MCF 10A (cell line): ENCODE measurements at regions of chr13 and their contacts with region 1.

Region 1: GRCh38 chr13:99442273-99442895 is 58.9 kb upstream of the TM9SF2 start:
- DNase-seq: peak; percentile 61
- H3K4me3 Mint-ChIP-seq: no peak overlapping the region
- H3K27ac Mint-ChIP-seq: no peak overlapping the region
- H3K4me1 Mint-ChIP-seq: no peaks in the 10 kb centered on the region
- H3K27me3 Mint-ChIP-seq: peaks cover 19% of the 10 kb centered on the region
- CTCF ChIP-seq: peak; percentile 92

Region 2: DNA sequence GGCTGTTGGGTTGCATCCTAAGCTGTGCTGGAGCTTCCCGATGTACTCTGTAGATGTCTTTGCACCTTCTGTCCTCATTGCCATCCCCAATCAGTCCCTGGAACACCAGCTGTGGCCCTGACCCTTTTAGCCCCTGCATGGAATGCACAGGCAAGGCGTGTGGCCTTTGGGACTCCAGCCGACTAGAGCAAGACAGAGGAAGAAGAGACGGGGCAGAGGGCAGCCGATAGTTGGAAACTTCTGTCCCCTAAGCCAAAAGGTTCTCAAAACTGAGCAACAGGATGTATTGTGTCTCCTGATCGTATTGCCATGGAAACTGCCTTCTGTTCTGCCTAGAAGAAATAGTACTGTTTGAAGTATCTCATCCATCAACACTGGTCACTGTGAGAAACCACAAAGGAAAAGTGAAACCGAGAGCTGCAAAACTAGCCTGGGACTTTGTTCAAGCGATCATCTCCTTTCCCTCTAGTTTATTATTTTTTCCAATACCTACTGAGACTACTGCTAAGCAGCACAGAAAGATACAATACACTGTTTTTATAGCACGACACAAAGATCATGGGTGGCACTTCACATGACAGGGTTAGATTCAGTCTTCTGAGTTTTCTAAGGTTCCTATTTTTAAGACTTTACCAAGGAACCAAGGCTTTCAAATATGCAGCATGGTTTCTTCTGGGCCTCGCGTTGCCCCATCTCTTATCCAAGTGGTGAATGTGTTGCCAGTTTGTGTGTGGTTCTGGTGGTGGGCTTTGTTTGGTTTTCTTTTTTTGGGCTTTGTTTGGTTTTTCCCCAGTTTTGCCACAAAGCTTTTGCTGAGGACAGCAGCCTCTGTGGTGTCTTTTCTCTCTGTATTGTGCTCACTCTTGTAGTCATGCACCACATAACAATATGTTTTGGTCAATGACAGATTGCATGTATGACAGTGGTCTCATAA is 86.0 kb before region 1 on chr13:
- CTCF ChIA-PET with region 1: no interaction called
- POLR2A ChIA-PET with region 1: no interaction called
- intact Hi-C with region 1: no loop called
- DNase-seq: no peak
- H3K4me3 Mint-ChIP-seq: no peak overlapping the region
- H3K27ac Mint-ChIP-seq: no peak overlapping the region
- H3K4me1 Mint-ChIP-seq: no peaks in the 10 kb centered on the region
- H3K27me3 Mint-ChIP-seq: no peaks in the 10 kb centered on the region
- CTCF ChIP-seq: no peak

Region 3: DNA sequence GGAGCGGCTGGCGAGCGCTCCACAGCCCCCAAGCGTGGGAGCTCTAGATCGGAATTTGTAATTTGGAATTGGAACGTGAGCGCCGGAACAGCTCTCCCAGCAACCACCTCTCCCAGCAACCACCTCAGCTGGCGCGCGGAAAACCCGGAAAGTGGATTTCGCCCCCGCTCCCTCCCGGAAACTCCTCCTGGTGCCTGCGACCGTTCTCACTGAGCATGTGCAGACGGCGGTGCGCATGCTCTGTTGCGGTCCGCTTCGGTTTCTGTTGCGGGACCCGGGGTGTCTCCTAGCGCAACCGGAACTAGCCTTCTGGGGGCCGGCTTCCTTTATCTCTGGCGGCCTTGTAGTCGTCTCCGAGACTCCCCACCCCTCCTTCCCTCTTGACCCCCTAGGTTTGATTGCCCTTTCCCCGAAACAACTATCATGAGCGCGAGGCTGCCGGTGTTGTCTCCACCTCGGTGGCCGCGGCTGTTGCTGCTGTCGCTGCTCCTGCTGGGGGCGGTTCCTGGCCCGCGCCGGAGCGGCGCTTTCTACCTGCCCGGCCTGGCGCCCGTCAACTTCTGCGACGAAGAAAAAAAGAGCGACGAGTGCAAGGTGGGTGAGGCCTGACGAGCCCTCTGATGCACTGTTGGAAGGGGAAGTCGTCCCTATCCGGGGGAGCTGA is 58.9 kb after region 1 on chr13 and contains the start of gene TM9SF2:
- CTCF ChIA-PET with region 1: interaction called, 43 read pairs
- POLR2A ChIA-PET with region 1: interaction called, 3 read pairs
- intact Hi-C with region 1: loop called (anchors 1 kb)
- DNase-seq: peak; percentile 96
- H3K4me3 Mint-ChIP-seq: peak within 1 kb of the TSS; percentile 90
- H3K27ac Mint-ChIP-seq: peak within 1 kb of the TSS; percentile 83
- H3K4me1 Mint-ChIP-seq: peaks cover 27% of the 10 kb centered on the region
- H3K27me3 Mint-ChIP-seq: no peaks in the 10 kb centered on the region
- CTCF ChIP-seq: no peak
- total RNA-seq, gene TM9SF2: 71.1 and 77.0 TPM in 2 replicates

Region 4: DNA sequence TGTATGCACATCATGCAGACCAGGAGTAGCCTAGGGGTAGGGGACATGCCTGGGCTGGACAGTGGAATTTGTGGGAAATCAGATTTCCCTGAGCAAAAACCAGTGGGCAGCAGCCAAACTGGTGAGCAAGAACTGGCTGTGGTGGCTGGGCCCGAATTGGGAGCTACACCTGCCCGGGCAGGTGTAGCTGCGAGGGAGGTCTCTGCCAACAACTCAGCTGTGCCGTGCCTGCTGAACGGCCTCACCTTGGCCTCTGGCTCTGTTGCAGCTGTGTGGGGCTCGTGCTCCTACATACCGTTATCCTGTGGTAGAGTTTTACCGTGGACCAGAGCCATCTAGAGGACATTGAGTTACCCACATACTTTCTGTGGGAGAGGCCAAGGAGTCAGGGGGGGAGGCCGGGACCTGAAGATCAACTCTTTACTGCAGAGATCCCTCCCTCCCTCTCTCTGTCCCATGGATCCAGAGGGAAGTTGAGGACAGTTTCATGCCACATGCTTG is 172.1 kb after region 1 on chr13:
- CTCF ChIA-PET with region 1: interaction called, 16 read pairs
- POLR2A ChIA-PET with region 1: no interaction called
- intact Hi-C with region 1: loop called (anchors 1 kb)
- DNase-seq: peak; percentile 85
- H3K4me3 Mint-ChIP-seq: no peak overlapping the region
- H3K27ac Mint-ChIP-seq: peak overlapping the region; percentile 33
- H3K4me1 Mint-ChIP-seq: peaks cover 9% of the 10 kb centered on the region
- H3K27me3 Mint-ChIP-seq: no peaks in the 10 kb centered on the region
- CTCF ChIP-seq: no peak

Region 5: DNA sequence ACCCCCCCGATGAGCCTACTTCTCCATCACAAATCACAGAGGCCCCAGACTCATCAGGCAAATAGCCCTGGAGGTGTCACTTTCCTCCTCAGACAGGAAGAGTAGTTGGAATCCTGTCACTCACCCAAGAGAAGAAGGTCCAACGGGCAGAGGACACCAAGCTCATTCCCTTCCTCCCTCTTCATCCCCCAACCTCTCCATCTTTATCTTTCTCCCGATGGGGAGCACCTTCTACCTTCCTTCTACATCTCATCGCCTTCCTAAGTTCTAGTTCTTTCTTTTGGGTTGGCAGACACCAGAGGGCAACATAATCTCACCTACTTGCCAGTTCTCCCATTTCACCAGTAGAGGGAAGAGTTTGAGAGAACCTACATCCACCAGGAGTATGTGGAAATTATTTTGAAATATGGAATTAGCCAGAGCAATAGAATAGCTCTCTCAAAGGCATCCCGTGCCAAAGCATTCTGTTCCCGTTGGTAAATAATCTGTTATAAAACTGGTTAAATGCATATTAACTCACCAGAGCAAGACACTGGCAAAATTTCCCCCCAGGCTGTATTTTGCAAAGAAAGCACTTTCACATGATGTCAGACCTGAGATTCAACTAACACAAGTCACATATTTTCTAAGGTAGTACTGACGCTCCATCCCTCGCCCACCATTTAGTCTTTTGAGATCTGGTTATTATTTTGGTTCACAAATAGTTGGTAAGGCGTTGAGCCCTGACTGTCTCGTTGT is 474.2 kb after region 1 on chr13:
- CTCF ChIA-PET with region 1: interaction called, 4 read pairs
- POLR2A ChIA-PET with region 1: no interaction called
- intact Hi-C with region 1: loop called (anchors 10 kb)
- DNase-seq: peak; percentile 86
- H3K4me3 Mint-ChIP-seq: no peak overlapping the region
- H3K27ac Mint-ChIP-seq: no peak overlapping the region
- H3K4me1 Mint-ChIP-seq: peaks cover 6% of the 10 kb centered on the region
- H3K27me3 Mint-ChIP-seq: no peaks in the 10 kb centered on the region
- CTCF ChIP-seq: peak; percentile 91

Region 6: GRCh38 chr13:100214886-100215285 is 772.5 kb after region 1 on chr13:
- CTCF ChIA-PET with region 1: no interaction called
- POLR2A ChIA-PET with region 1: no interaction called
- intact Hi-C with region 1: no loop called
- DNase-seq: peak; percentile 69
- H3K4me3 Mint-ChIP-seq: no peak overlapping the region
- H3K27ac Mint-ChIP-seq: peak overlapping the region; percentile 14
- H3K4me1 Mint-ChIP-seq: peaks cover 42% of the 10 kb centered on the region
- H3K27me3 Mint-ChIP-seq: no peaks in the 10 kb centered on the region
- CTCF ChIP-seq: no peak

Region 7: GRCh38 chr13:100235311-100235901 is 793.0 kb after region 1 on chr13:
- CTCF ChIA-PET with region 1: interaction called, 4 read pairs
- POLR2A ChIA-PET with region 1: interaction called, 3 read pairs
- intact Hi-C with region 1: loop called (anchors 10 kb)
- DNase-seq: peak; percentile 75
- H3K4me3 Mint-ChIP-seq: peak overlapping the region; percentile 26
- H3K27ac Mint-ChIP-seq: no peak overlapping the region
- H3K4me1 Mint-ChIP-seq: peaks cover 14% of the 10 kb centered on the region
- H3K27me3 Mint-ChIP-seq: no peaks in the 10 kb centered on the region
- CTCF ChIP-seq: peak; percentile 68